Naive thymus-derived CD4-positive, alpha-beta T cell (primary cell): ENCODE measurements at regions of chr15 and their contacts with region 1.

Region 1: GRCh38 chr15:77024271-77025082 is 29.6 kb downstream of the PSTPIP1 start:
- DNase-seq: peak; percentile 35 to 74 (median 61)
- ATAC-seq: peak; percentile 64
- H3K4me3 ChIP-seq: no peak overlapping the region
- H3K4me3 Mint-ChIP-seq: peak overlapping the region in 2 of 10 donors; percentile 19 to 21
- H3K27ac ChIP-seq: peak overlapping the region; percentile 50
- H3K27ac Mint-ChIP-seq: peak overlapping the region in 8 of 9 donors; percentile 36 to 99 (median 86)
- H3K4me1 ChIP-seq: peaks cover 30 to 51% of the 10 kb centered on the region in 2 donors
- H3K4me1 Mint-ChIP-seq: peaks cover 33 to 59% (median 44%) of the 10 kb centered on the region in 7 donors
- H3K27me3 ChIP-seq: no peaks in the 10 kb centered on the region
- H3K27me3 Mint-ChIP-seq: no peaks in the 10 kb centered on the region

Region 2: DNA sequence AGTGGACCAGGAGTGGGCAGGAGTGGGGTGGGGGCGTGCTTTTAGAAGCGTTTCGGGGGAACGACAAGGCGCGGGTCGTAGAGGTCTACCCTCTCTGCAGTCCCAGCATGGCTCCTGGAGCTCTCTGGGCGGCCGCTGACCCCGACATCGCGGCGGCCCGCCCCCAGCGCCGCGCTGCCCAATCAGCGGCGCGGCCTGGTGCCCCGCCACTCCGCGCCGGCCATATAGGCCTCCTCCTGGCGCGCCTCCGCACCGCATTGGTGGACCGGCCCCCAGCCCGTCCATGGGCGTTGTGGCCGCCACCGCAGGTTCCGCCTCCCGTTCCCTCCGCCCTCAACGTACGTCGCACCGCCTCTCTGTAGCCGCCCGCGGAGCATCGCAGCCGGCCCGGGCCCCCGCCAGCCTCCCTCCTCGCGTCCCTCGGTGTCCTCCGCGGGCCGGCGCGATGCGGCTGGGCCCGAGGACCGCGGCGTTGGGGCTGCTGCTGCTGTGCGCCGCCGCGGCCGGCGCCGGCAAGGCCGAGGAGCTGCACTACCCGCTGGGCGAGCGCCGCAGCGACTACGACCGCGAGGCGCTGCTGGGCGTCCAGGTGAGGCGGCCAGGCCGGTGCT is 93.0 kb before region 1 on chr15 and contains the start of gene RCN2:
- CTCF ChIA-PET with region 1: interaction called, 4 read pairs
- POLR2A ChIA-PET with region 1: interaction called, 4 read pairs
- intact Hi-C with region 1: loop called in 1 of 2 experiments (anchors 5 kb)
- DNase-seq: peak; percentile 81 to 95 (median 88)
- ATAC-seq: peak; percentile 99
- H3K4me3 ChIP-seq: peak within 1 kb of the TSS; percentile 70
- H3K4me3 Mint-ChIP-seq: peak within 1 kb of the TSS; percentile 89 to 95 (median 92)
- H3K27ac ChIP-seq: peak within 1 kb of the TSS; percentile 73
- H3K27ac Mint-ChIP-seq: peak within 1 kb of the TSS; percentile 76 to 96 (median 91)
- H3K4me1 ChIP-seq: peaks cover 4 to 14% of the 10 kb centered on the region in 2 donors
- H3K4me1 Mint-ChIP-seq: peaks cover 19 to 42% (median 33%) of the 10 kb centered on the region in 7 donors
- H3K27me3 ChIP-seq: no peaks in the 10 kb centered on the region
- H3K27me3 Mint-ChIP-seq: peaks cover 0 to 20% (median 0%) of the 10 kb centered on the region in 5 donors
- total RNA-seq, gene RCN2: 16.7 to 30.5 (median 28.1) TPM

Region 3: DNA sequence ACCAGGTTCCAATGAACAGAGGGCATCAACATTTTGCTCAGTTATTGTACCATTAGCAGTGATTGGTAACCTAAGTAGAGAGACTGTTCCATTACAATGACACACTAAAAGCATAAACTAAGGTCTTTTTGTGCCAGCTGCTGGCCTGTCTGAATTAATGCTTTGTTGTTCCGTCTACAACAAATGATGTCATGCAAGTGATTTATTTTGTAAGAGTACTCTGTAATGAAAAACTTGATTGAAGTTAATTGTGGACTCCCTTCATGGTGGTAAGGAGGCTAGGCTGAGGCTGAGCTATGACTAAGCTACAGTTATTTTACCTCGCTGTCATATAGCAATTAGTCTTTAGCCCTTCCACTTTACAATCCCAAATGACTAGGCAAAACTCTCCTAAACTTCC is 69.7 kb before region 1 on chr15:
- CTCF ChIA-PET with region 1: no interaction called
- POLR2A ChIA-PET with region 1: no interaction called
- intact Hi-C with region 1: no loop called
- DNase-seq: no peak
- ATAC-seq: no peak
- H3K4me3 ChIP-seq: no peak overlapping the region
- H3K4me3 Mint-ChIP-seq: no peak overlapping the region
- H3K27ac ChIP-seq: no peak overlapping the region
- H3K27ac Mint-ChIP-seq: peak overlapping the region in 1 of 9 donors; percentile 36
- H3K4me1 ChIP-seq: no peaks in the 10 kb centered on the region
- H3K4me1 Mint-ChIP-seq: peaks cover 0 to 9% (median 7%) of the 10 kb centered on the region in 7 donors
- H3K27me3 ChIP-seq: no peaks in the 10 kb centered on the region
- H3K27me3 Mint-ChIP-seq: peaks cover 0 to 6% (median 0%) of the 10 kb centered on the region in 5 donors

Region 4: DNA sequence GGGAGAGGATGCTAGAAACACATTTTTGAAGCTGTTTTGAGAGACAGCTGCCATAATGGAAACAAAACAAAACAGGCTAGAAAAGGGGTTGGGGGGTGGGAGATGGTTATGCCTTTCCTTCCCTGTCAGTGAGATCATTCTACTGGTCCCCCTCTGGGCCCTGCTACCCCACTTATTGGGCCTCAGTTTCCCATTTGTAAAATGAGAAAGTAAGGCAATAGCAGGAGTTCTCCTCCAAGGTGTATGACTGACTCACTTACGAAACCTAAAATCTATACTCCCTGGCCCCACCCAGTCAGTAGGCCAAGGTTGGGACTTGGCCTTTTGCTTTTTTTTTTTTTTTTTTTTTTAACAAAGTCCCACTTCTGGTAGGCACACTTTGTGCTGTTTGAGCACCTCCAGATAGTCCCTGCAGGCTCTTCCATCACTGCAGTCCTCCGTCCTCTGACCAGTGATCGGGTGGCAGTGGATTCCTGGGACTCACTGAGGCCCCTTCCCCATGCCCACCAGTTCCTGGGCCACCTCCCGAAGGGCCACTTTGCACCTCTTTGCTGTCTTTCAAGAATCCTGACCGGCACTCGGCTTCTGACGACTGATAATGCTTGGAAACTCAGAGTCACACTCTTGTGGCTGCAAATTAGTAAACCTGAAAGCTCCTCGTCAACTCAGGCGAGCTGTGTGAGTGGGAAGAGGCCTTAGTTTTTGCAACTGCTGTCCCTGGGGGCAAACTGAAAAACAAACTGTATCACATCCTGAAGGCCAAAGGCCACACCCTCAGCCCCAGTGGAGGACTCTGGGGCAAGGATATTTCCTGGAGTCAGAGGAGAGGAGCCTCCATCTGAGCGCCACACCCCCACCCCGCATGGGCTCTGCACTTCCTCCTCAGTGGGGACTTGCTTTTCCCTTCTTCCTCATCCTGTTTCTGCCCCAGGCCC is 36.3 kb before region 1 on chr15:
- CTCF ChIA-PET with region 1: interaction called, 7 read pairs
- POLR2A ChIA-PET with region 1: no interaction called
- intact Hi-C with region 1: loop called in 1 of 2 experiments (anchors 5 kb)
- DNase-seq: peak in 1 of 9 donors; percentile 77
- ATAC-seq: peak; percentile 64
- H3K4me3 ChIP-seq: no peak overlapping the region
- H3K4me3 Mint-ChIP-seq: peak overlapping the region in 2 of 10 donors; percentile 31 to 76
- H3K27ac ChIP-seq: no peak overlapping the region
- H3K27ac Mint-ChIP-seq: peak overlapping the region in 7 of 9 donors; percentile 40 to 98 (median 78)
- H3K4me1 ChIP-seq: peaks cover 9 to 29% of the 10 kb centered on the region in 2 donors
- H3K4me1 Mint-ChIP-seq: peaks cover 23 to 79% (median 32%) of the 10 kb centered on the region in 7 donors
- H3K27me3 ChIP-seq: no peaks in the 10 kb centered on the region
- H3K27me3 Mint-ChIP-seq: no peaks in the 10 kb centered on the region

Region 5: GRCh38 chr15:76994971-76995945 is 29.2 kb before region 1 on chr15 and contains the start of gene PSTPIP1:
- CTCF ChIA-PET with region 1: interaction called, 6 read pairs
- POLR2A ChIA-PET with region 1: interaction called, 81 read pairs
- intact Hi-C with region 1: loop called (anchors 1 to 2 kb)
- DNase-seq: peak; percentile 52 to 79 (median 74)
- ATAC-seq: peak; percentile 83
- H3K4me3 ChIP-seq: peak within 1 kb of the TSS; percentile 90
- H3K4me3 Mint-ChIP-seq: peak within 1 kb of the TSS; percentile 93 to 99 (median 96)
- H3K27ac ChIP-seq: peak within 1 kb of the TSS; percentile 80
- H3K27ac Mint-ChIP-seq: peak within 1 kb of the TSS; percentile 88 to 98 (median 96)
- H3K4me1 ChIP-seq: peaks cover 57 to 58% of the 10 kb centered on the region in 2 donors
- H3K4me1 Mint-ChIP-seq: peaks cover 61 to 76% (median 65%) of the 10 kb centered on the region in 7 donors
- H3K27me3 ChIP-seq: no peaks in the 10 kb centered on the region
- H3K27me3 Mint-ChIP-seq: no peaks in the 10 kb centered on the region
- total RNA-seq, gene PSTPIP1: 101 to 182 (median 146) TPM

Region 6: GRCh38 chr15:77002954-77003912 is 21.2 kb before region 1 on chr15:
- CTCF ChIA-PET with region 1: interaction called, 3 read pairs
- POLR2A ChIA-PET with region 1: interaction called, 81 read pairs
- intact Hi-C with region 1: loop called in 1 of 2 experiments (anchors 1 kb)
- DNase-seq: peak in 8 of 9 donors; percentile 55 to 76 (median 66)
- ATAC-seq: peak; percentile 87
- H3K4me3 ChIP-seq: peak overlapping the region; percentile 28
- H3K4me3 Mint-ChIP-seq: peak overlapping the region; percentile 39 to 85 (median 76)
- H3K27ac ChIP-seq: peak overlapping the region; percentile 72
- H3K27ac Mint-ChIP-seq: peak overlapping the region; percentile 78 to 94 (median 87)
- H3K4me1 ChIP-seq: peaks cover 45 to 77% of the 10 kb centered on the region in 2 donors
- H3K4me1 Mint-ChIP-seq: peaks cover 65 to 89% (median 84%) of the 10 kb centered on the region in 7 donors
- H3K27me3 ChIP-seq: no peaks in the 10 kb centered on the region
- H3K27me3 Mint-ChIP-seq: no peaks in the 10 kb centered on the region

Region 7: GRCh38 chr15:77013776-77014131 is 10.7 kb before region 1 on chr15:
- CTCF ChIA-PET with region 1: interaction called, 11 read pairs
- POLR2A ChIA-PET with region 1: interaction called, 5 read pairs
- intact Hi-C with region 1: loop called (anchors 1 kb)
- DNase-seq: peak in 5 of 9 donors; percentile 45 to 82 (median 49)
- ATAC-seq: peak; percentile 73
- H3K4me3 ChIP-seq: peak overlapping the region; percentile 43
- H3K4me3 Mint-ChIP-seq: peak overlapping the region; percentile 64 to 91 (median 77)
- H3K27ac ChIP-seq: peak overlapping the region; percentile 58
- H3K27ac Mint-ChIP-seq: peak overlapping the region; percentile 76 to 97 (median 95)
- H3K4me1 ChIP-seq: peaks cover 62 to 99% of the 10 kb centered on the region in 2 donors
- H3K4me1 Mint-ChIP-seq: peaks cover 58 to 93% (median 75%) of the 10 kb centered on the region in 7 donors
- H3K27me3 ChIP-seq: no peaks in the 10 kb centered on the region
- H3K27me3 Mint-ChIP-seq: no peaks in the 10 kb centered on the region

Region 8: DNA sequence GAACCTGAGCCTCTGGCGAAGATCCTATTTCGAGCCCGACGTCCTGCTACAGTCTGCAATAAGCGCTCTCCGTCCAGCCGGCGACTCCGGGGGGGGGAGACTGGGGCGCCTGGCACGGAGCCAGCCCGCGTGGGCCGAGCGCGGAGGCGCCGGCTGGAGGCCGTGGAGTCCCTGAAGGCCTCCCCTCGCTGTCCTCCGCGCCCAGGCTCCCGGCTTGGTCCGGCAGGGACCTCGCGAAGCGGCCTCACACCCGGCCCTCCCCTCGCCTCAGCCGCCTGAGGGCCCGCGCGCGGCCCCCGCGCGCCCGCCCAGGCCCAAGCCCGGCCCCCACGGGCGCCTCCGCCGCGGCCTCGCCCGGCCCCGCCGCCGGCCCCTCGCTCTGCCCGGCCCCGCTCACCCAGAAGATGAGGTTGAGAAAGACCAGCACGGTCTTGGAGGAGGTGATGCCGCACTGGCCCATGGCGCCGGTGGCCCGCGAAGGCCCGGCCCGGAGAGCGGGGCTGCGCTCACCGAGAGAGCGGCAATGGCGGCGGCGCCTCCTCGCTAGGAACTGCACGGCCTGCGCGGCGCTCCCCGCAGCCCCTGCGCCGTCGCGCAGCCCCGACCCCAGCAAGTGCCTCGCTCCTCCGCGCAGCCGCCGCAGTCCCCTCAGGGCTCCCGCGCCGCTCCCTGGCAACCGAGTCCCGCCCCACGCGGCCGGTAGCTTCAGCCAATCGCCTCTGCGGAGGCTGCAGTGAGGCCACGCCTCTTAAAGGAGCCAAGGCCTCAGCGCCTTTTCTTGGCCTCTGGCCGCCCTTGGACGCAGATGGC is 46.2 kb after region 1 on chr15 and contains the start of gene TSPAN3:
- CTCF ChIA-PET with region 1: no interaction called
- POLR2A ChIA-PET with region 1: no interaction called
- intact Hi-C with region 1: loop called in 1 of 2 experiments (anchors 2 kb)
- DNase-seq: peak; percentile 88 to 93 (median 92)
- ATAC-seq: peak; percentile 99
- H3K4me3 ChIP-seq: peak within 1 kb of the TSS; percentile 50
- H3K4me3 Mint-ChIP-seq: peak within 1 kb of the TSS; percentile 81 to 90 (median 86)
- H3K27ac ChIP-seq: peak within 1 kb of the TSS; percentile 62
- H3K27ac Mint-ChIP-seq: peak within 1 kb of the TSS; percentile 54 to 93 (median 80)
- H3K4me1 ChIP-seq: peaks cover 5 to 14% of the 10 kb centered on the region in 2 donors
- H3K4me1 Mint-ChIP-seq: peaks cover 7 to 48% (median 29%) of the 10 kb centered on the region in 7 donors
- H3K27me3 ChIP-seq: peaks cover 0 to 2% of the 10 kb centered on the region in 2 donors
- H3K27me3 Mint-ChIP-seq: peaks cover 0 to 22% (median 0%) of the 10 kb centered on the region in 5 donors
- total RNA-seq, gene TSPAN3: 17.5 to 24.4 (median 21.7) TPM